Sciatic nerve (tissue), 2 donors: ENCODE measurements at regions of chr11 and their contacts with region 1.

Region 1: GRCh38 chr11:101428918-101429317 is 154.9 kb downstream of the TRPC6 start:
- DNase-seq: no peak
- ATAC-seq: no peak

Region 2: DNA sequence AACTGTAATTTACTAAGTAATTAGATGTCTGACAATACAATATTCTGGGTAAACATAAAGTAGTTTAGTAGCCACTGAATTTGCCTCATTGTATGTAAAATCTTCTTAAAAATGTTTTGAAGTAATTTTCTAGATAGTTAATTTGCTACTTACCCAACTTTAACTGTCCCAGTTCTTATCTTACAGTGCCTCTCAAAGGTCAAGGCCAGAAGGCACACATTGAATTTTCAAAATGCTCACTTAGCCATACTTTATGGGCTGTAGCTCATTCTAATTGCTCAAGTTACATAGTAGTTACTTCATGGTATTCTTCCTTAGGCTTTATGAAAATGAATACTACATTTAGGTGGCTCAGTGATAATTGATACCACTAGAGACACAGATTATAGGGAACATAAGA is 1741.6 kb before region 1 on chr11:
- intact Hi-C with region 1: no loop called
- DNase-seq: no peak
- ATAC-seq: no peak

Region 3: GRCh38 chr11:100592619-100593260 is 836.2 kb before region 1 on chr11:
- intact Hi-C with region 1: loop called (anchors 5 kb)
- DNase-seq: no peak
- ATAC-seq: peak; percentile 85

Region 4: DNA sequence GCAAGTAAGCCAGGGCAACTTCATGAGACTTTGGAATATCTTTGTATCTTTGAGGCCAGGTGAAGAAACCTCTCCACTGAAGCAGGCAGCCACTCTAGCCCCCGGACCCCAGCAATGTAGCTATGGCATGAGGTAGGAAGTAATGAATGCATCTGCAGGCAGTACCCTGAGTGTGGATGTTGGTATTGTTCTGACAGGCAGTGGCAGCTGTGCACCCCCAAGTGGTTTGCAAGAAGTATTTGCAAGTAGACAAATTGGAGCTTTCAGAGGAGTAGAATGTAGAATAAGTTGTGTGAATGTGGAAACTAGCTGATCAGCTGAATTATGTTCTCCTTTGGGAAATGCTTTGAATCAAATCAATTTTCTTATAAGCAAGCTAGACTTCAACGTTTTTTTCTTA is 104.9 kb before region 1 on chr11:
- intact Hi-C with region 1: no loop called
- DNase-seq: no peak
- ATAC-seq: no peak

Region 5: DNA sequence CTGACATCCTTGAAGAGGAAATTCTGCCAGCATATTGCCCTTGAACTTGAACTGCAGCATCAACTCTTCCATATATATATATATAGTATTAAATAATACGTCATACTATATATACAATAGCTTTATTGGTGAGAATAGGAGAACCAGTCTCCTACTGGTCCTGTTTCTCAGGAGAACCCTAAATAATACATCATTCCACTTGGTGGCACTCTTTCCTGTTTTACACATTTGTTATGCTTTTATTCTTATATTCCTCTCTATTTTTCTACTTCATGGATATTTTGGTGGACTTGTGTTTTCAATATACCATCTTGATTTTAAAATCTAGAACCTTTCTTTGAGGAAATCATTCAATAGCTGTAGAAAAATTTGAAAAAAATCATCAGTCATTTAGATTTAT is 38.4 kb before region 1 on chr11:
- intact Hi-C with region 1: no loop called
- DNase-seq: no peak
- ATAC-seq: no peak

Region 6: GRCh38 chr11:101487775-101488174 is 58.9 kb after region 1 on chr11:
- intact Hi-C with region 1: no loop called
- DNase-seq: no peak
- ATAC-seq: no peak